Lower leg skin (tissue), 4 donors: ENCODE measurements at regions of chr4 and their contacts with region 1.

Region 1: GRCh38 chr4:156738766-156739165 is 232.8 kb downstream of the PDGFC start:
- DNase-seq: no peak
- H3K4me3 ChIP-seq: no peak overlapping the region
- CTCF ChIP-seq: no peak
- POLR2A ChIP-seq: no peak

Region 2: DNA sequence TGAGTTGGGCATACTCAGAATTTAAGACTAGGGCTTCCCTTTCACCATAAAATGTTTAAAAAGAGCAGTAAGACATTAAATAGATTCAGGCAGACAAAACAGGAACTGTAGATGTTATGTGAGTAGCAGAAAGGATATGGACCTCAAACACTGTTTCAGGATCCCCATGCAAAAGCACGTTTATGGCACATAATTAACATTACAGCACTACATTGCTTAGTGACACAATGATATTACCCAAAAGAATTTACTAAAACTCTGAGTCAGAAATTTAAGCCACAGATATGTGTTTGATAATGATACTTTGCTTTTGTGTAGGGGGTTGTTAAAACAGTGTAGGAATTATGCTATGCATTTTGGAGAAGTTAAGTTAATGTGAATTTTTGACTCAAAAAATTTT is 33.5 kb before region 1 on chr4:
- intact Hi-C with region 1: loop called (anchors 1 kb)
- DNase-seq: no peak
- H3K4me3 ChIP-seq: no peak overlapping the region
- CTCF ChIP-seq: no peak
- POLR2A ChIP-seq: no peak